ENCODE measurements at regions of chr22 and their contacts with region 1.

Region 1: DNA sequence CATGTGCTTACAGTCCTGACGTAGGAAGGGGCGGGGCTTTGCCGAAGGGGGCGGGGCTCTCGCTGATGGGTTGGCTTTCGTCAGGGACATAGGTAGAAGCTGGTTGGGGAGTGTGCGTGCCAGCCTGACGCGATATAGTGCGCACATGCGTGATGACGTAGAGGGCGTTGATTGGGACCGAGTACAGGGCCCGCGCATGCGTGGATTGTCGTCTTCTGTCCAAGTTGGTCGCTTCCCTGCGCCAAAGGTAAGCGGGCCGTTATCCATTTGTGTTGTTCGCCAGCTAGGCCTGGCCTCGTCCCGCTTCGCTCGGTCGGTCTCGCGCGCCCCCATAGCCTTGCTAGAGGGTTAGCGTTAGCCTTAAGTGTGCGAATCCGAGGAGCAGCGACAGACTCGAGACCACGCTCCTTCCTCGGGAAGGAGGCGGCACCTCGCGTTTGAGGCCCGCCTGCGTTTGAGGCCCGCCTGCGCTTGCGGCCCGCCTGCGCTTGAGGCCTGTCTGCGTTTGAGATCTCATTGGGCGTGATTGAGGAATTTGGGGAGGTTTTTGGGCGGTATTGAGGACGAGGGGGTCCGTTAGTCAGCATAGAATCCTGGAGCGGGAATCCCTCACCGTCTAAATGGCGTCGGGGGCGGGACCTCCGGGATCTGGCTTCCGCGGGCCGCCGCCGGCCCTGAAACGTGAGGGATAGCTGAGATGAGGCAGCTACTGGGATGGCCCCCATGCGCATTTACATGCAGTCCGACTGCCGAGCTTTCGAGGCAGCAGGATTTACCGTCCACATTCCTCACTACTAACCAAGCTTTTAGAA is at the start of gene XRCC6:
- DNase-seq: peak; percentile 100
- H3K4me3 ChIP-seq: peak within 1 kb of the TSS; percentile 95 to 97
- H3K27ac ChIP-seq: peak within 1 kb of the TSS; percentile 96 to 99
- H3K4me1 ChIP-seq: peaks cover 5% of the 10 kb centered on the region
- H3K27me3 ChIP-seq: no peaks in the 10 kb centered on the region
- CTCF ChIP-seq: peak in 1 of 4 experiments; percentile 6
- POLR2A ChIP-seq: peak; percentile 78
- total RNA-seq, gene XRCC6: 247 to 254 TPM

Region 2: DNA sequence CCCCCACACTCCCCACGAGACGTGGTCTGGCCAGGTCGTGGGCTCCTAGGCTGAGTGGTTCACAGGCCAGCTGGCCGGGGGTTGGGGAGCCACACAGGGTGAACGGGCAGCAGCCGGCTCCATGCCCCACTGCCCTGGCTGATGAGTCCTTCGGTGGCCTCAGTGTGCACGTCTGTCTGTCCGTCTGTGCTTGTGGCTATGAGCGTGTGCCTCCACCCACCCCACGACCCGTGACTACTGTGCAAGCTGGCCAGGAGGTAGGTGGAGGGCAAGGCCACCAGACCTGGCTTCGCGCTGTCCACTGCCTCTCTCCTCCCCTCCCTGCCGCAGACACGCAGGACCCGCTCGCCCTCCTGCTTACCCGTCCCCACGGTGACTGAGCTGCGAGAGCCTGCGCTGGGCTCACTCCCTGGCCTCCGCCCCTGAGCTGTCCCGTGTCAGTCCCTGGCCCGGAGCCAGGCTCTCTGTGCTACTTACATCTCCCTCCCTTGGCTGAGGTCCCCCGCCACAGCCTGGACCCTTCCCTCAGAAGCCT is 46.4 kb before region 1 on chr22:
- intact Hi-C with region 1: no loop called
- DNase-seq: no peak
- H3K4me3 ChIP-seq: no peak overlapping the region
- H3K27ac ChIP-seq: no peak overlapping the region
- H3K4me1 ChIP-seq: no peaks in the 10 kb centered on the region
- H3K27me3 ChIP-seq: no peaks in the 10 kb centered on the region
- CTCF ChIP-seq: no peak
- POLR2A ChIP-seq: no peak

Region 3: DNA sequence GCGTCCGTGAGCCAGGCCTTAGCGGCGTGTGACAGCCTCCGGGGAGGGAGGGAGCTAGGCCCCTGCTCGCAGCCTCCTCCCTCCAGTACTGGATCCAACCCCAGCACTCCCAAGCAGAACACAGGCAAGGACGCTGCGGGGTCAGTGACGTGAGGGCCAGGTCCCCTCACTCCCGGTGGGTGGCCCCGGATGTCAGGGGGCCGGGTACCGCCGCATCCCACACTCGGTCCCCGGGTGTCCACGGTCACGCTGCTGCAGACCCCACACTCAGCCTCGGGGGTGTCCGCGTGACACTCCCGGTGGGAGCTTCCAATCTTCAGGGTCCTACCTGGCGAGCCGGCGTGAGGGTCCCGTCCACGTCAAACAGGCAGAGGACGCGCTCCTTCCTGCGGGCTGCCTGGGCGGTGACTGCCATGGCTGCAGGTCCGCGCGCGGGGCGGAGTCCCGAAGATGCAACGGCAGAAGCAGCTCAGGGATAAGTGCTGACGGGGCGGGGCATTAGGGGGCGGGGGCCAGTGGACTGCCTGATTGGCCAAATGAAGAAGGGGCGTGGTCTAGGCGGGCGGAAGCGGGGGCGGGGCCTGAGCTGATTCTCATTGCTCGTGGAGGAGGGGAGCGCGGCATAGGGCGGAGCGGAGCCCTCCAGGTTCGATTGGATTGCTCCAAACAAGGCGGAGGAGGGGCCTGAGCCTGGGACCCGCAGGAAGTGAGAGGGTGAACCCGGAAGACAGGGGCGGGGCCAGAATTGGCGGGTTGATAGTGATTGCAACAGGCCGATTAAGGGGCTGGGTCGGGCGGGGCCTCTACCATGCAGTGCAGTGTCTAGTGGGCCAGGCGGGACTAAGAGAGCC is 31.7 kb before region 1 on chr22 and contains the start of gene PMM1:
- intact Hi-C with region 1: loop called (anchors 2 kb)
- DNase-seq: peak; percentile 100
- H3K4me3 ChIP-seq: peak within 1 kb of the TSS; percentile 67 to 89
- H3K27ac ChIP-seq: peak within 1 kb of the TSS; percentile 79
- H3K4me1 ChIP-seq: peaks cover 5% of the 10 kb centered on the region
- H3K27me3 ChIP-seq: no peaks in the 10 kb centered on the region
- CTCF ChIP-seq: peak in 1 of 4 experiments; percentile 18
- POLR2A ChIP-seq: peak; percentile 93
- total RNA-seq, gene PMM1: 49.0 to 58.6 TPM

Region 4: GRCh38 chr22:41688365-41689211 is 67.3 kb after region 1 on chr22 and contains the start of gene SNU13:
- intact Hi-C with region 1: no loop called
- DNase-seq: peak; percentile 86
- H3K4me3 ChIP-seq: peak within 1 kb of the TSS; percentile 81 to 85
- H3K27ac ChIP-seq: peak within 1 kb of the TSS; percentile 90 to 98
- H3K4me1 ChIP-seq: no peaks in the 10 kb centered on the region
- H3K27me3 ChIP-seq: no peaks in the 10 kb centered on the region
- CTCF ChIP-seq: peak in 1 of 4 experiments; percentile 10
- POLR2A ChIP-seq: peak; percentile 74
- total RNA-seq, gene SNU13: 150 to 161 TPM